Transverse colon (tissue), 4 donors: ENCODE measurements at regions of chrX and their contacts with region 1.

Region 1: GRCh38 chrX:42818151-42818921 is 40.4 kb upstream of the PPP1R2C start:
- DNase-seq: no peak
- H3K4me3 ChIP-seq: no peak overlapping the region
- H3K27ac ChIP-seq: no peak overlapping the region
- H3K4me1 ChIP-seq: no peaks in the 10 kb centered on the region
- H3K27me3 ChIP-seq: no peaks in the 10 kb centered on the region
- CTCF ChIP-seq: no peak
- EP300 ChIP-seq: no peak
- POLR2A ChIP-seq: no peak

Region 2: GRCh38 chrX:42755820-42756219 is 62.5 kb before region 1 on chrX:
- in situ Hi-C with region 1: no loop called
- intact Hi-C with region 1: no loop called
- DNase-seq: no peak
- H3K4me3 ChIP-seq: no peak overlapping the region
- H3K27ac ChIP-seq: no peak overlapping the region
- H3K4me1 ChIP-seq: no peaks in the 10 kb centered on the region
- H3K27me3 ChIP-seq: no peaks in the 10 kb centered on the region
- CTCF ChIP-seq: no peak
- EP300 ChIP-seq: no peak
- POLR2A ChIP-seq: no peak

Region 3: GRCh38 chrX:44113337-44113736 is 1295.0 kb after region 1 on chrX:
- in situ Hi-C with region 1: no loop called
- intact Hi-C with region 1: loop called (anchors 5 kb)
- DNase-seq: no peak
- H3K4me3 ChIP-seq: no peak overlapping the region
- H3K27ac ChIP-seq: no peak overlapping the region
- H3K4me1 ChIP-seq: no peaks in the 10 kb centered on the region
- H3K27me3 ChIP-seq: no peaks in the 10 kb centered on the region
- CTCF ChIP-seq: no peak
- EP300 ChIP-seq: no peak
- POLR2A ChIP-seq: no peak